Sciatic nerve (tissue), 2 donors: ENCODE measurements at regions of chr3 and their contacts with region 1.

Region 1: DNA sequence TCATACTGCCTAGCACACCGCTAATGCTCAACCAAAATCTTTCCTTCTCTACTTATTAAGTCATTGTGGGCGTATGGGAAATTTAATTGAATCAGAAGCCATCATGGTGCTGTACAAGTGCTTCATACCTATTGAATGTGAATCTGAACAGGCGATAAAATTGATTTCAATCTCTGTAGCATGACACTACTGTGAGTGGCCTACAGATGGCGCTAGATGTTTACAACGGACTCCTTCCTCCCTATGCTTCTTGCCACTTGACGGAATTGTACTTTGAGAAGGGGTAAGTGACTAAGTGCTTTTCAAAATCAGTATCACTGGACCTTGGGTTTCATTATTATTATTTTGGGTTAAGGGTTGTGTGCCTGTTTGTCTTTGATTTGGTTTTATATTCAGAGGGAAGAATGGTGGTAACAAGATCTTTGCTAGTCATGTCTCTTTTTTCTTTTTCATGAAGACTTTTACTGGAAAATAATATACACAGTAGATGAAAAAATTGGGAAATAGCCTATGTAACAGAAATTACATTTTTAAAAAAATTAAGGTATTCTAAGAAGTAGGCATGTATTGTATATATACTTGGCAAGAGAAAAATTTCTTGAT is 35.4 kb downstream of the ACP3 start:
- DNase-seq: peak; percentile 80
- ATAC-seq: peak; percentile 77

Region 2: DNA sequence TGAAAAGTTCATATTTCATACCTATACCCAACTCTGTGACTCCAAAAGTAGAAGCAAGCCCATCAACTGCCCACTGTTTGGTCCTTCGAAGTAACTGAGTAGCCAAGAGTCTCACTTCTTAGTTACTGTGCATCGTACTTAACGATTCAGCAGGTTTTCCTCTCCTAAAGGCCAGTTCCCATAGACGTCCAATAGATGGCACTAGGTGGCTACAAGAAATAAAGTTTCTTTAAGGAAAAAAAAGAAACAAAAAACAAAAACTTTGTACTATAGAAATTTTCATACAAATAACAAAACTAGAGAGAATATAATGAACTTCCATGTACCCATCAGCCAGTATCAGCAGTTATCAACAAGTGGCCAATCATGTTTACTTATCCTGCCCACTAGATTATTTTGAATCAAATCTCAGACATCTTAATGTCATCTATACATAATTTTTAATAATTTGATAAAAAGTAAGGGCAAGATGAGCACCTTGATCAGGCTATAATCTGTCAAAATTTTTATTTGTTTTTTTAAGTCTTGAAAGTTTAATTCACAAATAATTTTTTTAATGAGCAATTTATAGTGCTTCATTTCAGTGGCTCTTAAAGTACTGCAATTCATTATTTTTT is 99.3 kb before region 1 on chr3:
- intact Hi-C with region 1: loop called (anchors 5 kb)
- DNase-seq: no peak
- ATAC-seq: no peak